ENCODE measurements at regions of chr19 and their contacts with region 1.

Region 1: GRCh38 chr19:46076951-46077816 is 36.4 kb upstream of the IGFL4 start:
- H3K4me3 ChIP-seq: peak overlapping the region; percentile 47
- H3K27ac ChIP-seq: no peak overlapping the region; the same call in 1 of the 2 replicates
- H3K4me1 ChIP-seq: peaks cover 5% of the 10 kb centered on the region
- CTCF ChIP-seq: peak; percentile 99

Region 2: DNA sequence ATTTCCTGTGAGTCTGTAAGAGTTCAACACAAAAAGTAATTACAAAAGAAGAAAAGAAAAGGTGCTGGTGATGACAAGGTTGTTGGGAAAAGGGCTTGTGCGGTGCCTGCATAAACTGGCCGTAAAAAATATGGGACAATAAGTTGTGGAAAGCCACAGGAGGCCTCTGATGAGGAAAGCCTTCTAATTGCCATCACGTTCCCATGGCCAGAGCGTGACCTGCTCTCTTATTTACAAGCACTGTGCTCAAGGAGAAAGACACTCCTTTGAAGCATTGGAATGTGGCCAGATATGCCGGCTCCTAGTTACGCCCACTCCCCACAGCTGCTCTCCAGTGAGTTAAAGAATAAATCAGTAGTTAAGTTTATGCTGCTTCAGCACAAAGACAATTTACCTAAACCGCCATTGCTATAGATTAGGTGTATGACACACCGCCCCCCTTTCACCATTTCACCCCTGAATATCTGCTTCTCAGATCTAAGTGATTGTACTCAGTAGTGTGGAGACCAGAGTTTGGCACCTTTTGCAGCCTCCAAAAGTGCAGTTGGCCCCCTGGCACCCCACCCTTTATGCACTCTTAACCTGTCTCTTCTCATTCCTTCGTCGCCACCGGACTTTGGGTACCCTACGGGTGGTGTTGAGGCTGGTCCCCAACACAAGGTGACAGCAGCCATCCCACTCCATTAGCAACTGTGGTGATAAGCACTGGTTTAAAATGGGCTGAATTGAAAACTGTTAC is 46.2 kb before region 1 on chr19:
- CTCF ChIA-PET with region 1: interaction called, 625 read pairs
- POLR2A ChIA-PET with region 1: interaction called, 11 read pairs
- H3K4me3 ChIP-seq: no peak overlapping the region
- H3K27ac ChIP-seq: no peak overlapping the region
- H3K4me1 ChIP-seq: peaks cover 8% of the 10 kb centered on the region; the same call in 1 of the 2 replicates
- CTCF ChIP-seq: no peak

Region 3: DNA sequence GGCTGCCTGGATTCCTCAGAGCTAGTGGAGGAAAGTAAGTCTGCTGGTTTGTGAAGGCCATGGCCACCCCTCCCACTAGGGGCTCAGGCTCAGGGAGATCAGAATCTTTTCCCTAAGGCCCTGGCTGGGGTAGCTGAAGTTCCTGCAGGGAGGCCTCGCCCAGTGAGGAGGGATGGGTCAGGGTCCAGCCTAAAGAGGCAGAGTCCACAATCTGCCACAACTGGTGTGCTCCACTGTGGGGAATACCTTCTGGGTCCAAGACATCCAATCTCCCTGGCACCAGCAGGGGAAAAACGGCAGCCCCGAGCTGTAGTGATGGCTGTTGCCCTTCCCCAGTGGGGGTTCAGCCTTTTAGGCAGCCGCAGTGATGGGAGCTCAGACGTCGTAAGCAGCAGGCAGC is 24.1 kb after region 1 on chr19:
- CTCF ChIA-PET with region 1: interaction called, 13 read pairs
- POLR2A ChIA-PET with region 1: no interaction called
- H3K4me3 ChIP-seq: no peak overlapping the region
- H3K27ac ChIP-seq: no peak overlapping the region
- H3K4me1 ChIP-seq: no peaks in the 10 kb centered on the region
- CTCF ChIP-seq: no peak

Region 4: GRCh38 chr19:46192992-46193650 is 115.9 kb after region 1 on chr19:
- CTCF ChIA-PET with region 1: interaction called, 256 read pairs
- POLR2A ChIA-PET with region 1: no interaction called
- H3K4me3 ChIP-seq: no peak overlapping the region
- H3K27ac ChIP-seq: no peak overlapping the region; the same call in 1 of the 2 replicates
- H3K4me1 ChIP-seq: peaks cover 10% of the 10 kb centered on the region
- CTCF ChIP-seq: no peak

Region 5: DNA sequence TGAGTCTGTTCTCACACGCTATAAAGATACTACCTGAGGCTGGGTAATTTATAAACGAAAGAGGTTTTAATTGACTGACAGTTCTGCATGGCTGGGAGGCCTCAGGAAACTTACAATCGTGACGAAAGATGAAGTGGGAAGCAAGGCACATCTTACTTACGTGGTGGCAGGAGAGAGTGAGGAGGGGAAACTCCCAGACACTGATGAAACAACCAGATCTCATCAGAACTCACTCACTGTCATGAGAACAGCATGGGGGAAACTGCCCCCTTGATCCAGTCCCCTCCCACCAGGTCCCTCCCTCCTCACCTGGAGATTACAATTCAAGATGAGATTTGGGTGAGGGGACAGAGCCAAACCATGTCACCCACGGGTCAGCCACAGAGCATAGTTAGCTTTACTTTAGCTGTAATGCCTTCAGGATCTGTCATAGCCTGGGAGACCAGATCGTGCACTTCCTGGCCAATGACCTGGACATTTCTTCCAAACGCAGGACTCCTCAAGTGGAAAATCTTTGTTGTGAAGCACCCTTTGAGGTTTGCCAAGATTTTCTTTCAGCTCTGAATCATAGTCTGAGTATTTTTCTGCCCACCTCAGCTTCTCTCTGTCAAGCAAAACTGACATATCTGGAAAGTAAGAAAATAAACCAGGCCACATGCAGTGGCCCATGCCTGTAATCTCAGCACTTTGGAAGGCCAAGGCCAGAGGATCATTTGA is 194.5 kb after region 1 on chr19:
- CTCF ChIA-PET with region 1: interaction called, 431 read pairs
- POLR2A ChIA-PET with region 1: no interaction called
- H3K4me3 ChIP-seq: no peak overlapping the region
- H3K27ac ChIP-seq: no peak overlapping the region
- H3K4me1 ChIP-seq: no peaks in the 10 kb centered on the region
- CTCF ChIP-seq: no peak

Region 6: DNA sequence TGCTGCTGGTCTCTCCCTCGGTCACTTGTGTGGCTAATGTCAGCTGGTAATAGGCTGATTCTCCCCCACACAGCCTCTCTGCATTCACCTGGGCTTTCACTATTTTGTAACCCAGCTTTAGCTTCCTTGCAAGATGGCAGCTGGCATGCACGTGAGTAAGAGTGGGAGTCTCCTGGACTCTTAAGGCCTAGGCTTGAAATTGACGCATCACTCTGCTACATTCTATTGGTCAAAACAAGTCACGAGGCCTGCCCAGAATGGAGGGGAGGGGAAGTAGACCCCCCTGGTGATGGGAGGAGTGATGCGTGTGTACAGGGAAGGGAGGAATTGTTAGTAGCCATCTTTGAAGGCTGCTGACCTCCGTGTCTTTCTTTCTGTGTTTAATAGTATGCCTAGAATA is 443.4 kb after region 1 on chr19:
- CTCF ChIA-PET with region 1: no interaction called
- POLR2A ChIA-PET with region 1: no interaction called
- H3K4me3 ChIP-seq: no peak overlapping the region
- H3K27ac ChIP-seq: no peak overlapping the region
- H3K4me1 ChIP-seq: no peaks in the 10 kb centered on the region
- CTCF ChIP-seq: no peak